ENCODE measurements at regions of chr15 and their contacts with region 1.

Region 1: GRCh38 chr15:64731012-64731806 is 44.2 kb downstream of the RBPMS2 start:
- DNase-seq: peak; percentile 81 to 95 (median 92)
- ATAC-seq: peak; percentile 67 to 72
- H3K4me3 ChIP-seq: no peak overlapping the region
- H3K27ac ChIP-seq: no peak overlapping the region
- H3K4me1 ChIP-seq: no peaks in the 10 kb centered on the region
- H3K27me3 ChIP-seq: no peaks in the 10 kb centered on the region

Region 2: GRCh38 chr15:64681424-64682024 is 49.7 kb before region 1 on chr15:
- intact Hi-C with region 1: loop called (anchors 2 to 5 kb)
- DNase-seq: no peak
- ATAC-seq: peak; percentile 65 to 76
- H3K4me3 ChIP-seq: no peak overlapping the region
- H3K27ac ChIP-seq: no peak overlapping the region
- H3K4me1 ChIP-seq: peaks cover 3% of the 10 kb centered on the region
- H3K27me3 ChIP-seq: no peaks in the 10 kb centered on the region

Region 3: DNA sequence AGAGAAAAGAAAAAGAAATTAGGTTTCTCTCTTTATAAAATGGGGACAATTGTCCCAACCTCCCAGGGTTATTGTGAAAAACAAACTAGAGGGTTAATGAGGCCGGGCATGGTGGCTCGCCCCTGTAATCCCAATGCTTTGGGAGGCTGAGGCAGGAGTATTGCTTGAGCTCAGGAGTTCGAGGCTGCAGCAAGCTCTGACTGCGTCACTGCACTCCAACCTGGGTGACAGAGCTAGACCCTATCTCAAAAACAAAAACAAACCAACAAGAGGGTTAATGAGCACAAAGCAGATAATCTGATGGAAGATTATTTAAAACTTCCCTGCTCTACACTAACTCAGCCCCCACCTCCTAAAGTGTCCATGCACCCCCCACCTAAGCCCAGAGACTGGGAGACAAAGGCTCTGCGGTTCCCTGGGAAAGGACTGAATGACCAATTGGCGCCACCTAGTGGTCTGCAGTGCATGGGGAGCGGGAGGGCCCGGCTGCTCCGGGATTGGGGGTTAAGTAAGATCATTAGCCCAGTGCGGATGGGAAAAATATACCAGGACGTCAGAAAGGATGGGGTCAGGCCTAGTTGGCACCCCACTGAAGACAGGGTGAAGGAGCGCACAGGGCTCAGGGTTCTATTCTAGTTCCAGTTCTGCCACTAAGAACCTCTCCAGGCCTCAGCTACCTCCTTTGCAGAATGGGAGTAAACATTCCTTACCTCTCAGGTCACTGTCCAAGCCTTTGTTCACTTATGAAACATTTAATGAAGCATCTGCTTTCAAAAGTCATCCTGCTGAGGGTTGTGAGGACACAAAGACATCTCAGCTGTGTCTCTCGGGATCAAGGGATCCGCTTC is 78.7 kb after region 1 on chr15:
- intact Hi-C with region 1: loop called (anchors 2 to 5 kb)
- DNase-seq: peak; percentile 85 to 93 (median 91)
- ATAC-seq: peak; percentile 81 to 82
- H3K4me3 ChIP-seq: no peak overlapping the region
- H3K27ac ChIP-seq: no peak overlapping the region
- H3K4me1 ChIP-seq: no peaks in the 10 kb centered on the region
- H3K27me3 ChIP-seq: no peaks in the 10 kb centered on the region

Region 4: GRCh38 chr15:64841258-64842095 is 110.3 kb after region 1 on chr15 and contains the start of gene PLEKHO2:
- intact Hi-C with region 1: no loop called
- DNase-seq: peak; percentile 98 to 99 (median 99)
- ATAC-seq: peak; percentile 89 to 92
- H3K4me3 ChIP-seq: peak within 1 kb of the TSS; percentile 90
- H3K27ac ChIP-seq: peak within 1 kb of the TSS; percentile 84
- H3K4me1 ChIP-seq: peaks cover 8% of the 10 kb centered on the region
- H3K27me3 ChIP-seq: no peaks in the 10 kb centered on the region
- total RNA-seq, gene PLEKHO2: 11.6 to 22.3 (median 13.8) TPM

Region 5: GRCh38 chr15:64905119-64905831 is 174.1 kb after region 1 on chr15:
- intact Hi-C with region 1: loop called in 3 of 4 experiments (anchors 5 to 10 kb)
- DNase-seq: peak; percentile 84 to 95 (median 93)
- ATAC-seq: peak; percentile 92 to 94
- H3K4me3 ChIP-seq: peak overlapping the region; percentile 11
- H3K27ac ChIP-seq: no peak overlapping the region
- H3K4me1 ChIP-seq: no peaks in the 10 kb centered on the region
- H3K27me3 ChIP-seq: no peaks in the 10 kb centered on the region